GM12878 (cell line): ENCODE measurements at regions of chr1 and their contacts with region 1.

Region 1: GRCh38 chr1:159071970-159072582 is 4.5 kb downstream of the AIM2 start:
- DNase-seq: no peak
- ATAC-seq: peak; percentile 1; the same call in 2 of the 3 replicates
- H3K4me3 ChIP-seq: peak overlapping the region; percentile 13; the same call in 1 of the 2 replicates
- H3K27ac ChIP-seq: peak overlapping the region; percentile 20; the same call in 1 of the 2 replicates
- H3K4me1 ChIP-seq: peaks cover 35% of the 10 kb centered on the region
- H3K27me3 ChIP-seq: no peaks in the 10 kb centered on the region
- CTCF ChIP-seq: peak; percentile 61 to 78 (median 62)
- EP300 ChIP-seq: no peak
- POLR2A ChIP-seq: no peak
- RAD21 ChIP-seq: peak; percentile 74

Region 2: GRCh38 chr1:158203693-158204457 is 868.2 kb before region 1 on chr1:
- CTCF ChIA-PET with region 1: interaction called, 21 read pairs
- POLR2A ChIA-PET with region 1: no interaction called
- RAD21 ChIA-PET with region 1: interaction called, 15 read pairs
- SMC1A ChIA-PET with region 1: interaction called, 21 read pairs
- in situ Hi-C with region 1: no loop called
- intact Hi-C with region 1: loop called (anchors 5 kb)
- DNase-seq: peak; percentile 8
- ATAC-seq: peak; percentile 92
- H3K4me3 ChIP-seq: no peak overlapping the region
- H3K27ac ChIP-seq: no peak overlapping the region
- H3K4me1 ChIP-seq: no peaks in the 10 kb centered on the region
- H3K27me3 ChIP-seq: no peaks in the 10 kb centered on the region
- CTCF ChIP-seq: peak; percentile 56 to 70 (median 56); a peak in 5 of 6 replicates
- EP300 ChIP-seq: no peak
- POLR2A ChIP-seq: no peak
- RAD21 ChIP-seq: peak; percentile 68

Region 3: GRCh38 chr1:158728510-158729225 is 343.4 kb before region 1 on chr1:
- CTCF ChIA-PET with region 1: no interaction called
- POLR2A ChIA-PET with region 1: no interaction called
- RAD21 ChIA-PET with region 1: no interaction called
- SMC1A ChIA-PET with region 1: no interaction called
- in situ Hi-C with region 1: no loop called
- intact Hi-C with region 1: no loop called
- DNase-seq: no peak
- ATAC-seq: no peak
- H3K4me3 ChIP-seq: no peak overlapping the region
- H3K27ac ChIP-seq: no peak overlapping the region
- H3K4me1 ChIP-seq: no peaks in the 10 kb centered on the region
- H3K27me3 ChIP-seq: no peaks in the 10 kb centered on the region
- CTCF ChIP-seq: no peak
- EP300 ChIP-seq: no peak
- POLR2A ChIP-seq: no peak
- RAD21 ChIP-seq: no peak

Region 4: GRCh38 chr1:158793604-158794003 is 278.5 kb before region 1 on chr1:
- CTCF ChIA-PET with region 1: interaction called, 28 read pairs
- POLR2A ChIA-PET with region 1: no interaction called
- RAD21 ChIA-PET with region 1: interaction called, 3 read pairs
- SMC1A ChIA-PET with region 1: interaction called, 14 read pairs
- in situ Hi-C with region 1: no loop called
- intact Hi-C with region 1: no loop called
- DNase-seq: no peak
- ATAC-seq: peak; percentile 87
- H3K4me3 ChIP-seq: no peak overlapping the region
- H3K27ac ChIP-seq: no peak overlapping the region
- H3K4me1 ChIP-seq: no peaks in the 10 kb centered on the region
- H3K27me3 ChIP-seq: no peaks in the 10 kb centered on the region
- CTCF ChIP-seq: peak; percentile 41 to 62 (median 59)
- EP300 ChIP-seq: no peak
- POLR2A ChIP-seq: no peak
- RAD21 ChIP-seq: peak; percentile 83

Region 5: DNA sequence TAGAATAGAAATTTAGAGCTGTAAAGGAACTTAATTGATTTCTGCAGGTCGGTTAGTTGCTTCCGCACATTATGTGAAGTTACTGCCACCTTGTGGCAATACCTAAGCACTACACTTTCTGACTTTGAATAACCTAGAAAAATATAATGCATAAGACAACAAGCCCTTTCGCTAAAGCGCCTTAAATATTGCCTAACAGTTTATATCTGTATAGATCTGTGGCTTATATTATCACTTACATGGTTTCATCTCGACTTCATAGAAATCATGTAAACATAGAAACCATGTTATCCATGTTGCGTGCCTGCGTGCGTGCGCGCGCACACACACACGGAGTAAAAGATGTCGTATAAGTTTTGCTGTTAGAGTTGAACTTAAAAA is 73.3 kb before region 1 on chr1:
- CTCF ChIA-PET with region 1: interaction called, 62 read pairs
- POLR2A ChIA-PET with region 1: interaction called, 4 read pairs
- RAD21 ChIA-PET with region 1: interaction called, 29 read pairs
- SMC1A ChIA-PET with region 1: interaction called, 46 read pairs
- in situ Hi-C with region 1: no loop called
- intact Hi-C with region 1: no loop called
- DNase-seq: peak; percentile 50
- ATAC-seq: peak; percentile 68
- H3K4me3 ChIP-seq: no peak overlapping the region
- H3K27ac ChIP-seq: no peak overlapping the region
- H3K4me1 ChIP-seq: peaks cover 7% of the 10 kb centered on the region
- H3K27me3 ChIP-seq: no peaks in the 10 kb centered on the region
- CTCF ChIP-seq: peak; percentile 68 to 81 (median 80)
- EP300 ChIP-seq: no peak
- POLR2A ChIP-seq: no peak
- RAD21 ChIP-seq: peak; percentile 96

Region 6: DNA sequence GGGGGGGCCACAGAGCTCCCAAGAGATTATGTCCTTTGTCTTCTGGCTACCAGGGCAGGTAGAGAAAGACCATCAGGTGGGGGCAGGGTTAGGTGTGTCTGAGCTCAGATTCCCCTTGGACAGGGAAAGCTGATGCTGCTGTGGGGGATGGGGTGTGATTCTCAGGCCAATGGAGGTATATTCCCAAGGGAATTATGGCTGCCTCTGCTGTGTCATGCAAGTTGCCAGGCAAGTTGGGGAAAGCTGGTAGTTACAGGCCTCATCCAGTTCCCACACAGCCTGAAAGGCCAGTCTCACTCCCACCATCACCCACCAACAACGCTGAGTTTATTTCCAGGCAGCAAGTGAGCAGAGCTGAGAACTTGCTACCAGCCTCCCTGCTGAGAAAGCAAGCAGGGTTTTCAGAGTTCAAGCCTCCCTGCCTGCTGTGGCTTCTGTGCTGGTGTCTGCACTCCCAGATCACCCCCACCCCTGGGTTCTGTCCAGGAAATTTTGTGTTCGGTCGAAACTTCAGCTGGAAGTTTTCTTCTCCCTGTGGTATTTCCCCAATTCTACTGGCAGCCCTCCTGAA is 41.1 kb before region 1 on chr1:
- CTCF ChIA-PET with region 1: interaction called, 4 read pairs
- POLR2A ChIA-PET with region 1: no interaction called
- RAD21 ChIA-PET with region 1: no interaction called
- SMC1A ChIA-PET with region 1: interaction called, 10 read pairs
- in situ Hi-C with region 1: no loop called
- intact Hi-C with region 1: no loop called
- DNase-seq: no peak
- ATAC-seq: no peak; the same call in 2 of the 3 replicates
- H3K4me3 ChIP-seq: no peak overlapping the region
- H3K27ac ChIP-seq: no peak overlapping the region
- H3K4me1 ChIP-seq: no peaks in the 10 kb centered on the region
- H3K27me3 ChIP-seq: no peaks in the 10 kb centered on the region
- CTCF ChIP-seq: no peak
- EP300 ChIP-seq: no peak
- POLR2A ChIP-seq: no peak
- RAD21 ChIP-seq: no peak

Region 7: GRCh38 chr1:159122005-159122621 is 50.0 kb after region 1 on chr1:
- CTCF ChIA-PET with region 1: no interaction called
- POLR2A ChIA-PET with region 1: no interaction called
- RAD21 ChIA-PET with region 1: no interaction called
- SMC1A ChIA-PET with region 1: no interaction called
- in situ Hi-C with region 1: no loop called
- intact Hi-C with region 1: no loop called
- DNase-seq: peak; percentile 19
- ATAC-seq: peak; percentile 87
- H3K4me3 ChIP-seq: no peak overlapping the region
- H3K27ac ChIP-seq: no peak overlapping the region
- H3K4me1 ChIP-seq: peaks cover 9% of the 10 kb centered on the region
- H3K27me3 ChIP-seq: peaks cover 2 to 11% of the 10 kb centered on the region in 2 experiments; a peak in 3 of 4 replicates
- CTCF ChIP-seq: no peak
- EP300 ChIP-seq: peak; percentile 79 to 82; a peak in 3 of 4 replicates
- POLR2A ChIP-seq: no peak
- RAD21 ChIP-seq: no peak

Region 8: GRCh38 chr1:159924981-159925712 is 853.1 kb after region 1 on chr1 and contains the start of gene TAGLN2:
- CTCF ChIA-PET with region 1: no interaction called
- POLR2A ChIA-PET with region 1: interaction called, 12 read pairs
- RAD21 ChIA-PET with region 1: interaction called, 4 read pairs
- SMC1A ChIA-PET with region 1: no interaction called
- in situ Hi-C with region 1: no loop called
- intact Hi-C with region 1: loop called (anchors 10 kb)
- DNase-seq: peak; percentile 60
- ATAC-seq: peak; percentile 73
- H3K4me3 ChIP-seq: peak within 1 kb of the TSS; percentile 82
- H3K27ac ChIP-seq: peak within 1 kb of the TSS; percentile 82
- H3K4me1 ChIP-seq: peaks cover 32% of the 10 kb centered on the region
- H3K27me3 ChIP-seq: no peaks in the 10 kb centered on the region
- CTCF ChIP-seq: no peak
- EP300 ChIP-seq: no peak
- POLR2A ChIP-seq: peak; percentile 99
- RAD21 ChIP-seq: no peak
- polyA plus RNA-seq, gene TAGLN2: 216 to 262 TPM